Activated naive CD4-positive, alpha-beta T cell treated with anti-CD3 and anti-CD28 coated beads for 36 hours (primary cell): ENCODE measurements at regions of chr4 and their contacts with region 1.

Region 1: DNA sequence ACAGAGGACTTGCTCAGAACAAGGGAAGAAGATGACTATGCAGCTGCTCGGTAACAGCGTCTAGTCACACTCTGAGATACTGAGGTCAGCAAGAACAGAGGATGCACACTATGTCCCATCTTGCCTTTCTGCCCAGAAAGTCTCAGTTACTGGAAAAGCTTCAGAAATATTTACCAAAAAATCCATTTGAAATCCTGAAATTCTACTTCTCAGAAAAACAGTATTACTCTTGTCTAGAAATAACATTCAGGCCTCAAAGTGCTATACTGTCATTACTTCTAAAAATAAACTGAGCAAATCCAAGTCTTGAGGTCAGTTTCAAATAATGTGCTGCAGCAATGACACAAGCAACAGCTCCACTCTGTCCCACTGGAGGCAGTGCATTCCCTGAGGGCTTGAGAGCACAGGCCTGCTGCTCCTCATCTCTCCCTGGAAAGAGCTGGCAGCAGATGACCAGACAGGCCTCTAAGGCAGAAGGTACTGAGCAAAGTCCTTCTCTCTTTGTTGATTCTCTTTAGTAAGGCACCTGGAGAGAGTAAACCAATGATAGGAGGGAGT is 76.9 kb downstream of the CAMK2D start:
- DNase-seq: peak; percentile 77
- H3K4me3 Mint-ChIP-seq: peak overlapping the region; percentile 23
- H3K27ac Mint-ChIP-seq: peak overlapping the region; percentile 88
- H3K4me1 Mint-ChIP-seq: peaks cover 74% of the 10 kb centered on the region
- H3K27me3 Mint-ChIP-seq: no peaks in the 10 kb centered on the region

Region 2: GRCh38 chr4:113355550-113356371 is 328.9 kb before region 1 on chr4:
- CTCF ChIA-PET with region 1: no interaction called
- intact Hi-C with region 1: loop called (anchors 1 kb)
- DNase-seq: peak; percentile 91
- H3K4me3 Mint-ChIP-seq: peak overlapping the region; percentile 59
- H3K27ac Mint-ChIP-seq: peak overlapping the region; percentile 98
- H3K4me1 Mint-ChIP-seq: peaks cover 39% of the 10 kb centered on the region
- H3K27me3 Mint-ChIP-seq: peaks cover 42% of the 10 kb centered on the region

Region 3: DNA sequence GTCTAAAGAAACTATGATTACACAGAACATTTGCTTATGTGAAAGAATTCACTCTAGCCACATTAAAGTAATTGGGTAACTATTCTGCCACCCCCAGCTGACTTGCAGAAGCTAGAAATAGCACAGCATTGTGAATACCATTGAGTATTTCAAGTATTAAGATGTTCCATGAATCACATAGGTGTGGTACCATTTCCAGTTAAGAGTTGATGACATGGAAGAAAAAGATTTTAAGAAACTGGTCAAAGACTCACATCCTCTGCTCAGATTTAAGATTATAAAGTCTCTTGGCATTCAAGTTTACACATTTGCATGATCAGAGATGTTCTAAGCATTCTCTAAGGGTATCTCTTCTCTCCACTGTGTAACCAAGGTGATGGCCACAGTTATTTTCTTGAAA is 210.6 kb before region 1 on chr4:
- CTCF ChIA-PET with region 1: no interaction called
- intact Hi-C with region 1: loop called (anchors 1 kb)
- DNase-seq: peak; percentile 55
- H3K4me3 Mint-ChIP-seq: no peak overlapping the region
- H3K27ac Mint-ChIP-seq: peak overlapping the region; percentile 84
- H3K4me1 Mint-ChIP-seq: peaks cover 56% of the 10 kb centered on the region
- H3K27me3 Mint-ChIP-seq: no peaks in the 10 kb centered on the region

Region 4: DNA sequence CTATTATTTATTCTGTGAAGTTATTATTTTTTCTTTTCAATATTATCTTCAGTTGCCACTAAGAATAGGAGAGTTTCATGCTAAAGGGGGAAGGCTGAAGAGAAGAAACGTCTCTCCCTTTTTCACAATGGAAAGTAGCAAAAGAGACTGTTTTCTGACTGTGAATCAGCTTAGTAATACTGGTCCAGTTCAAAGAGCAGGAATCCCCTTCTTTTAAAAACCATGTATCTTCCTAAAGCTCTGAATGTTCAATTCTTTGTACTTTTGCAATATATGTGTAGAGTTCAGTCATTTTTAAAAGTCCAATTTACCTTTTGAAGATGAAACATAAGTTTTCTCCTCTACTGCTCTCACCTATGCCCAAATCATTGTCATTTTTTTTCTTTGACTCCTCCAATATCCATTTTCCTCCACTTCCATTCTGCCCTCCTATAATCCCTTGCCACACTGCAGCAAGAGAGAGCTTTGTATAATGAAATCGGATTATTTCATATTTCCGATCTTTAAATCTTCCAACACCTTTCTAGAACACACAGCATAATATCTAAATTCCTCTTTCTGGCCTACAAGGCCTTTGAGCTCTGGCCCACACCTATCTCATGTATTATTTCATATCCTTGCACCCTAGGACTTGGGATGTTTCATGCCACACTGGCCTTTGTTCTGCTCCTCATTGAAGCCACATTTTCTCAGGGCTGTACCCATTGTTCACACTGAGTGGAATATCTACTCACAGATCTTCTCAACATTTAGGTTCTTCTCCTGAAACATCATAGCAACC is 118.4 kb before region 1 on chr4:
- CTCF ChIA-PET with region 1: interaction called, 3 read pairs
- intact Hi-C with region 1: loop called (anchors 2 kb)
- DNase-seq: no peak
- H3K4me3 Mint-ChIP-seq: no peak overlapping the region
- H3K27ac Mint-ChIP-seq: peak overlapping the region; percentile 15
- H3K4me1 Mint-ChIP-seq: peaks cover 40% of the 10 kb centered on the region
- H3K27me3 Mint-ChIP-seq: no peaks in the 10 kb centered on the region

Region 5: DNA sequence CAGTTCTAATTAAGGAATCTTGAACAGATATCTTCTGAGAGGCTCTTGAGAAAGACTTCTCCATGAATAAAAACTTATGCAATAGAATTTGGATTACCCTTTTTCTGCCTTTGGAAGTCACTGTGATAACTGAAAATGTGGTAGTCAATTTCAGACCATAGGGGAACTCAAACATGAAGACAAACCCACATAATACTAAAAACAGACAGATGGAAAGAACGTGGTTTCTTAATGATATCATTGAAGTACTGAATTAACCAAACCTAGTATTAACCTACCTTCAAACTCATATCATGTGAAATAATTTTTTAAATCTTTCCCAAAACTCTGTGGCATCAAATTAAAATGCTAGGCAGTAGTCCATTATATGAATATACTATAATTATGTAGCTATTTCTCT is 76.6 kb before region 1 on chr4:
- CTCF ChIA-PET with region 1: no interaction called
- intact Hi-C with region 1: no loop called
- DNase-seq: no peak
- H3K4me3 Mint-ChIP-seq: no peak overlapping the region
- H3K27ac Mint-ChIP-seq: no peak overlapping the region
- H3K4me1 Mint-ChIP-seq: peaks cover 29% of the 10 kb centered on the region
- H3K27me3 Mint-ChIP-seq: no peaks in the 10 kb centered on the region

Region 6: DNA sequence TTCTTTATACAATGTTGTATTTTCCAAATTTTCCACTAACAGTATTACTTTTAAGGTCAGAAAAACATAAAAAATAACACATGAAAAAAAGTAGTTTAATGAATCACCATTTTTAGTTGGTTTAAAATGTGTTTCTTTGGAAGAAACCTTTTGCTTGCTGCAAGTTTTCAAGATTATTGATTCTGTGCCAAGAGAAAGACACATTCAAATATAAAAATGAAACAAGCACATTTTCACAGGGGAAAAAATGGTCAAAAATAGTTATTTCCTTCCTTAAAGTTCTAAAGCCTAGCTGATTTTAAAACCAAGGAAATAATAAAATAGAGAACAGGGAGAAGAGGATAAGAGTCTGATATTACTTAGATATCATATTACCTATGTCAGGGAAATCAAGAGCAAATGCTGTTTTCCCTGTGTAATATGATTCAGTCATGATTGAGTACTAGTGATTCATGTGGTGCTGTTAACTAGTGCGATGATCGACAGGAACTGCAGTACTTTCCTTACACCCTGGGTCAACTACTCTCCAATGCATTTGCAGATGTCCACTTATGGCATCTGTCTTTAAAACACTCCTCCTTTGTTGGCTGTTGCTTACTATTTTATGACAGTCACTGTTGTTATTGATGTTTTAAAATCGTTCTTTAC is 26.9 kb before region 1 on chr4:
- CTCF ChIA-PET with region 1: no interaction called
- intact Hi-C with region 1: no loop called
- DNase-seq: no peak
- H3K4me3 Mint-ChIP-seq: no peak overlapping the region
- H3K27ac Mint-ChIP-seq: no peak overlapping the region
- H3K4me1 Mint-ChIP-seq: peaks cover 38% of the 10 kb centered on the region
- H3K27me3 Mint-ChIP-seq: no peaks in the 10 kb centered on the region

Region 7: DNA sequence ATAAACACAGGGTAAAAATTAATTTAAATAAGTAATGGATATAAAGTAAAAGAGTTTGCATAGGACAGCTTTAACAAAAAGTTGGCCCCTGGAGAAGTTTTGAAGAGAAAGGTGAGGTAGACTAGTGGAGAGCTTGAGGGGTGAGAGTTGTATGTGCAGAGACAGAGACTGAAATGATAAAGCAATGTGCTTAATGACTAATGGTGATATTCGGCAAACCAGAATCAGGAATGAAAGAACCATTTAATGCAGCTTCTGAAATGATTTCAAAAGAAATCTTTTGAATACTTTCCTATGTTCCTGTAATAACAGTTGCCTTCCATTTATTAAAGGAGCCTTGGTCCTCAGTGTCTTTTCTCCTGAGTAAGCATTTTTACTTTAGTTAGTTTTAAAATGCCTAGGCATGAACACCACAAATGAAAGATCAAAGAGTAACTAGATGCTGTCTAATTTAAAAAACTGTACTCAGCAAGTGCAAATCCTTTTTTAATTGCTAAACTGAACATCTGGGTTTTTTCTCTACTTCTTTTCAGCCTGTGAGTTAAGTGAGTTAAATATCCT is 48.4 kb after region 1 on chr4:
- CTCF ChIA-PET with region 1: no interaction called
- intact Hi-C with region 1: loop called (anchors 1 kb)
- DNase-seq: no peak
- H3K4me3 Mint-ChIP-seq: no peak overlapping the region
- H3K27ac Mint-ChIP-seq: peak overlapping the region; percentile 59
- H3K4me1 Mint-ChIP-seq: peaks cover 73% of the 10 kb centered on the region
- H3K27me3 Mint-ChIP-seq: no peaks in the 10 kb centered on the region

Region 8: DNA sequence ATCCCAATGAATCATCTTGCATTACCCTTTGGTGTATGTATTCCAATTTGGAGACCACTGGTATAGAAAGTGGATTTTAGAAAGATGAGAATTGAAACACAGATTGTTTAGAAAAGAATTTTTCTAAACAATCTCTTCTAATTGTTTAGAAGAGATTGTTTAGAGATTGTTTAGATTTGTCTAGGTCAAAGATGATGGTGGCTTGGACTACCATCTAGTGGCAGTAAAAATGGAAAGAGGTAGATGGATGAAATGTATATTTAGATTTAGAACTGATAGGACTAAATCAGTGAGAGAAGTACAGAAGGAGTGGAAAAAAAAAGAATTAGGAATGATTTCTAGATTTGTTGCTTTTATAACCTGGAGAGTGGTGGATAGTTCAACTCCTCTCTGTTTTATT is 224.2 kb after region 1 on chr4:
- CTCF ChIA-PET with region 1: no interaction called
- intact Hi-C with region 1: loop called (anchors 2 kb)
- DNase-seq: no peak
- H3K4me3 Mint-ChIP-seq: no peak overlapping the region
- H3K27ac Mint-ChIP-seq: no peak overlapping the region
- H3K4me1 Mint-ChIP-seq: peaks cover 25% of the 10 kb centered on the region
- H3K27me3 Mint-ChIP-seq: no peaks in the 10 kb centered on the region